ENCODE measurements at regions of chr7 and their contacts with region 1.

Region 1: DNA sequence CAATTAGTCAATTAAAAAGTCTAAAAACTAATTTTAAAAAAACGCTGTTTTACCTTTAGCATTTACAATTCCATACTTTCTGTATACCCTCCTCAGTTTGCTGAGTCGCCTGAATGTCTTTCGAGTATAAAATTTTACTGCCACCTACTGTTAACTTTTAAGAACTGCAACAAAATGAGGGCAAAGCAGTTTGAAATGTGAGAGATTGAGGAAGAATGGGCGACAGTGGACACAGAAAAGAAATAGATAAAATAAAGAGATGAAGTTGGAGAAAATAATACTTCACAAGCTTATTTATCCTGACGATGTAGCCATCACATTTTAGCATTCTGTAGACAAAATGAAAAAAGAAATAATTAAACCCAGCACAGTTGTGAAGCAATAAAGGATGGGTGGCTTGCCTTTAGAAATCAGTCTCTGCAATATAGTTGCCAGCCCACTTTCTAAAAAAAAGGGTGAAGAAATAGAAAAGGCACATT is 110.8 kb upstream of the PTN start:
- DNase-seq: peak; percentile 32 to 60 (median 54)
- ATAC-seq: peak; percentile 85
- H3K4me3 ChIP-seq: no peak overlapping the region
- H3K27ac ChIP-seq: no peak overlapping the region
- H3K4me1 ChIP-seq: no peaks in the 10 kb centered on the region
- H3K27me3 ChIP-seq: no peaks in the 10 kb centered on the region
- CTCF ChIP-seq: peak; percentile 53 to 76 (median 61); a peak in 5 of 6 replicates
- EP300 ChIP-seq: no peak
- POLR2A ChIP-seq: no peak
- RAD21 ChIP-seq: peak; percentile 78 to 82

Region 2: GRCh38 chr7:137169282-137169698 is 285.0 kb before region 1 on chr7:
- CTCF ChIA-PET with region 1: no interaction called
- POLR2A ChIA-PET with region 1: no interaction called
- in situ Hi-C with region 1: no loop called
- intact Hi-C with region 1: loop called (anchors 2 kb)
- DNase-seq: peak in 1 of 4 experiments; percentile 37
- ATAC-seq: peak; percentile 63
- H3K4me3 ChIP-seq: no peak overlapping the region
- H3K27ac ChIP-seq: no peak overlapping the region
- H3K4me1 ChIP-seq: no peaks in the 10 kb centered on the region
- H3K27me3 ChIP-seq: no peaks in the 10 kb centered on the region
- CTCF ChIP-seq: peak in 2 of 3 experiments; percentile 34 to 35; a peak in 2 of 6 replicates
- EP300 ChIP-seq: no peak
- POLR2A ChIP-seq: no peak
- RAD21 ChIP-seq: peak; percentile 45 to 48

Region 3: DNA sequence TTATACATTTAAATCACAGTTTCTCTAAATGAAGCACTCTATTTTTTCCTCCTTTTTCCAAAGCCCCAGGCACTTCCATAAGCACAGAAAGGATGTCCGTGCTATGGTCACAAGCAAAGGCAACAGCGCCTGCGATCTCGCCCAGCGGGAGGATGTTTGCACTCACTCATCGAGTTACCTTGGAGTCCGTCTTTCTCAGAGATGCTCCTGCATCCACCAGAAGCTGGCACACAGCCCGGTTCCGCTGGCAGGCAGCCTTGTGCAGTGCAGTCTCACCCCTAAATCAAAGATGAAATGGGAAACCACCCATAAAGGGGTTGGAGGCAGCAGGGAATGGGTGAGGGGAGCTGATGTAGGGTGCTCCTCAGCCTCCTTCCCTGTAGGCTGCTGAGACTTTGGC is 58.9 kb before region 1 on chr7:
- CTCF ChIA-PET with region 1: no interaction called
- POLR2A ChIA-PET with region 1: no interaction called
- in situ Hi-C with region 1: no loop called
- intact Hi-C with region 1: no loop called
- DNase-seq: no peak
- ATAC-seq: no peak
- H3K4me3 ChIP-seq: no peak overlapping the region
- H3K27ac ChIP-seq: no peak overlapping the region
- H3K4me1 ChIP-seq: no peaks in the 10 kb centered on the region
- H3K27me3 ChIP-seq: no peaks in the 10 kb centered on the region
- CTCF ChIP-seq: no peak
- EP300 ChIP-seq: no peak
- POLR2A ChIP-seq: no peak
- RAD21 ChIP-seq: no peak

Region 4: GRCh38 chr7:137592232-137592896 is 138.1 kb after region 1 on chr7:
- CTCF ChIA-PET with region 1: no interaction called
- POLR2A ChIA-PET with region 1: no interaction called
- in situ Hi-C with region 1: no loop called
- intact Hi-C with region 1: loop called (anchors 5 kb)
- DNase-seq: peak; percentile 48 to 76 (median 64)
- ATAC-seq: peak; percentile 94
- H3K4me3 ChIP-seq: no peak overlapping the region
- H3K27ac ChIP-seq: no peak overlapping the region
- H3K4me1 ChIP-seq: peaks cover 0 to 10% of the 10 kb centered on the region in 2 experiments; a peak in 3 of 5 replicates
- H3K27me3 ChIP-seq: no peaks in the 10 kb centered on the region
- CTCF ChIP-seq: peak; percentile 86 to 92 (median 92)
- EP300 ChIP-seq: no peak
- POLR2A ChIP-seq: no peak
- RAD21 ChIP-seq: peak; percentile 93